Motor neuron (in vitro differentiated cells): ENCODE measurements at regions of chr15 and their contacts with region 1.

Region 1: DNA sequence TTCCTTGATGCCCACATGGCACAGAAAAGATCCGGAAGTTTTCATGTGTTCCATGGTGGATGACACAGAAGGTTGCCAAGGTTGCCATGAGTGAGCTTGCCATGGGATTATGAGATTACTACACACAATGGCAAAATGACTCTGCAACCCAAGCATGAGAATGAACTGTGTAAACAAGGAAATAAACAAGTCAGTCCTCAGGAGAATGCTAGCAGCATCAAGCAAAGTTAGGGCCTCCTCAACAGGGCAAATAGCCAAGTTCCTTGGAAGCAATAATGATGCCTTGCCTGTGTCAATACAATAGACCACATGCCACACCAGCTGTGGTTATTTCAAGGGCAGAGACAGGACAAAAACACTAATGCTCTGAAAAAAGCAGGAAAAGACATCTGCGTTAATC is 41.8 kb downstream of the AQR start:
- ATAC-seq: peak in 3 of 8 experiments; percentile 28 to 88 (median 53)
- H3K4me3 ChIP-seq: no peak overlapping the region
- H3K27ac ChIP-seq: no peak overlapping the region
- H3K4me1 ChIP-seq: no peaks in the 10 kb centered on the region

Region 2: DNA sequence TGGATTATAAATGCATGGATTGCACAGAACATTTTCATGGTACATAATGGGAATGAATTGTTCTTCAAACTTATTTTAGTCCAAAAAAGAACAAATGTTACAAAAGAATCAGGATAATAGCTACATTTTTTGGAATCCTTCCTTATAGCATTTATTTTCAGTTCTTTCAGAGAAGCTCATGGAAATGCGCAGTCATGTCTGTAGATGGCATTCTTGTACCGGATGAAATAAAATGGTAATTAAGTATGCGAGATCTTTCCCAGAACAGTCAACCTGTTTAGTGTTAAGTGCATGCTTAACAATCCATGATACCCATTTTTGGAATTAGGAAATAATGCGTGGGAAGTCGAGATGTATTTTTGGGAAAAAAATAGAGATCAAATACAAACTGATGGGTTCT is 306.1 kb before region 1 on chr15:
- in situ Hi-C with region 1: loop called in 2 of 9 experiments (anchors 10 to 25 kb)
- ATAC-seq: peak in 3 of 8 experiments; percentile 48 to 76 (median 72)
- H3K4me3 ChIP-seq: no peak overlapping the region
- H3K27ac ChIP-seq: no peak overlapping the region
- H3K4me1 ChIP-seq: peaks cover 0 to 4% of the 10 kb centered on the region in 2 donors